ENCODE measurements at regions of chr19 and their contacts with region 1.

Region 1: DNA sequence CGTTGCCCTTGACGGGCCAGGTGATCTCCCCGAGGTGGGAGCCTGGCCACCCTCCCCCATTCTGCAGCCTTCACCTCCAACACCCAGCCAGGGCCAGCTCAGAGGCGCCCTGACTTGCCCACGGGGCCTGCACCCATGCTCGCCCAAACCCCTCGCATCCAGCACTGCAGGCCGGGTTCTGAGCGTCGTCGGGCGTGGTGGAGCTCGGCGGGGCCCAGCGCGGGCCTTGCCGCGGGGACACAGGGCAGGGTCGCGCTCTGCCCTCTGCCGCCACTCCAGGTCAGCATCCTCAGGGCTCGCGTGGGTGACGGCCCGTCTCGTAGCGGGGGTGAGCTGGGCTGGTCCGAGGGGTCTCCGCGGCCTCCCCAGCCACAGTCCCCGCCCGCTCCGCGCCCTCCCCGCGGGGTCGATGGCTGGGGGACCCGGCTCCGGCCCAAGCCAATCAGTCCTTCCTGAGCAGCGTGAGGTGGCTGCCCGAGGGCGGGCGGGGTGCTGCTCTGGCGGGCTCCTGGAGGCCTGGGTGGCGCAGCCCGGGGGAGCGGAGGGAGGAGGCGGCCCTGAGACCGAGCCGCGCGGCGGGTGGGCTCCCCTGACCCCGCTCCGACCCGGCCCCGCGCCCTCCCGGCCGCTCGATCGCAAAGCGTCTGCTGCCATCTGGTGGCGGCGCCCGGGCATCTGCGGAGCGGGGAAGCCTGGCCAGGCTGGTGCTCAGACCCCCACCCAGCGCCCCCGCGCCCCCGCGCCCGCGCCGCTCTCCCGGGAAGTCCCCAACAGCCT is 61.4 kb downstream of the CCNE1 start:
- DNase-seq: peak; percentile 57
- ATAC-seq: peak; percentile 82 to 88

Region 2: GRCh38 chr19:29735800-29736199 is 137.4 kb before region 1 on chr19:
- intact Hi-C with region 1: loop called (anchors 2 to 10 kb)
- DNase-seq: no peak
- ATAC-seq: no peak

Region 3: GRCh38 chr19:29761575-29762232 is 111.5 kb before region 1 on chr19:
- intact Hi-C with region 1: loop called in 1 of 2 experiments (anchors 5 kb)
- DNase-seq: no peak
- ATAC-seq: no peak

Region 4: DNA sequence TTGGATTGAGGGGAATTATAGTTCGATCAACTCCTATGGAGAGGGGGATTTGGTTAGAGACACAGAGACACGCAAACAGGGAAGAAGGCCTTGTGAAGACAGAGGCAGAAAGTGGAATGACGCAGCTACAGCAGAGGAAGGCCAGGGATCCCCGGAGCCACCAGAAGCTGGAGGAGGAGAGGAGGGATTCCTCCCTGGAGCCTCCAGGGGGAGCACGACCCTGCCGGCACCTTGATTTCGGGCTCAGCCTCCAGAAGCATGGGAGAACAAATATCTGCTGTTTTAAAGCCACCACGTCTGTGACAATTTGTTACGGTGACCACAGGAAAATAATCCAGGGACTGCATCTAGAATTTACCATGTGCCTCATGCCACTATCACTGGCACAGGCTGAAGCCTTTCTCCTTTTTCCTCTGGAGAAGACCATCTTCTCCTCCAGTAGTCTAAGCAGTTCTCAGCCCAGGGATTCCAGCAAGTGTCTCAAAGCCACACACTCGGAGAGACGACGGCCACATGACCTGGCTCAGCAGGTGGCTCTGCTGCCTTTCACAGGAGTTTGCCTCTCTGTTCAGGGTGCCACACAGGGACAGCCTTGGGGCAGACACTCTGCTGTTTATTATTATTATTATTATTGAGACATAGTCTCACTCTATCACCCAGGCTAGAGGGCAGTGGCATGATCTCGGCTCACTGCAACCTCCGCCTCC is 101.4 kb before region 1 on chr19:
- intact Hi-C with region 1: loop called in 1 of 2 experiments (anchors 5 kb)
- DNase-seq: peak; percentile 51
- ATAC-seq: peak; percentile 82 to 86

Measured in left cardiac atrium (tissue), 4 donors.